H1 (cell line): ENCODE measurements at regions of chr17 and their contacts with region 1.

Region 1: DNA sequence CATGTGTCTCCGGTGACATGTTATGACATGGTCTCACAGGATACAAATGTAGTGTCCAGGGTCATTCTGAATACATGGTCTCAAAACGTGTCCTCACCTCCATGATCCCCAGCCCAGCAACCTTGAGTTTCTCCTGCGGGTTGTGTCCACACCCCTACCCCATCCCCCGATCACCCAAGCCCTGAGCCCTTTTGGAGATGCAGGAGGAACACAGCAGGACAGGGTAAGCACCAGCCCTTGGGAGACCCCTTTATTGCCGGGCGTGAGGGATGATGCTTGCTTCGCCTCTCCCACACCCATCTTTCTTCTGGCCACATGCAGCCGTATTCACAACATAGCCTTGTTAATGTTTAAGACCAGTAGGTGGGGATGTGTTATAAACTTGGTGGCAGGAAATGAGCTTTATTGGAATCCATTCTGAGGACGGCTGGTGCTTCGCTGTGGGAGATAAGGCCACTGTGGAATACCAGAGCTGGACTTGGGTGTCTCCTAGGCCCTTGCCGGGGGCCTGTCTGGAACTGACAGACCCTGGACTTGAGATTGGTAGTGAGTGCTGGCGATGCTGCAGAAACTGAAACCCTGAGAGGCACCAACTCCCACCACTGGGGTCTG is 5.5 kb downstream of the TMEM132E start:
- DNase-seq: no peak
- H3K4me3 ChIP-seq: no peak overlapping the region
- H3K27ac ChIP-seq: no peak overlapping the region
- H3K4me1 ChIP-seq: peaks cover 0 to 22% (median 11%) of the 10 kb centered on the region in 4 experiments; a peak in 5 of 7 replicates
- H3K27me3 ChIP-seq: peaks cover 66 to 96% (median 90%) of the 10 kb centered on the region in 4 experiments
- CTCF ChIP-seq: peak in 2 of 3 experiments; percentile 27 to 49; a peak in 3 of 4 replicates
- EP300 ChIP-seq: no peak
- POLR2A ChIP-seq: no peak
- RAD21 ChIP-seq: peak; percentile 52 to 65

Region 2: GRCh38 chr17:34606763-34607162 is 21.9 kb after region 1 on chr17:
- CTCF ChIA-PET with region 1: interaction called, 10 read pairs
- POLR2A ChIA-PET with region 1: interaction called, 3 read pairs
- DNase-seq: no peak
- H3K4me3 ChIP-seq: no peak overlapping the region
- H3K27ac ChIP-seq: no peak overlapping the region; the same call in 1 of the 2 replicates
- H3K4me1 ChIP-seq: peaks cover 17 to 23% (median 20%) of the 10 kb centered on the region in 4 experiments
- H3K27me3 ChIP-seq: no peaks in the 10 kb centered on the region; a peak in 2 of 7 replicates
- CTCF ChIP-seq: no peak
- EP300 ChIP-seq: no peak
- POLR2A ChIP-seq: no peak
- RAD21 ChIP-seq: no peak